Right ventricle myocardium inferior (tissue), 1 donor: ENCODE measurements at regions of chr16 and their contacts with region 1.

Region 1: DNA sequence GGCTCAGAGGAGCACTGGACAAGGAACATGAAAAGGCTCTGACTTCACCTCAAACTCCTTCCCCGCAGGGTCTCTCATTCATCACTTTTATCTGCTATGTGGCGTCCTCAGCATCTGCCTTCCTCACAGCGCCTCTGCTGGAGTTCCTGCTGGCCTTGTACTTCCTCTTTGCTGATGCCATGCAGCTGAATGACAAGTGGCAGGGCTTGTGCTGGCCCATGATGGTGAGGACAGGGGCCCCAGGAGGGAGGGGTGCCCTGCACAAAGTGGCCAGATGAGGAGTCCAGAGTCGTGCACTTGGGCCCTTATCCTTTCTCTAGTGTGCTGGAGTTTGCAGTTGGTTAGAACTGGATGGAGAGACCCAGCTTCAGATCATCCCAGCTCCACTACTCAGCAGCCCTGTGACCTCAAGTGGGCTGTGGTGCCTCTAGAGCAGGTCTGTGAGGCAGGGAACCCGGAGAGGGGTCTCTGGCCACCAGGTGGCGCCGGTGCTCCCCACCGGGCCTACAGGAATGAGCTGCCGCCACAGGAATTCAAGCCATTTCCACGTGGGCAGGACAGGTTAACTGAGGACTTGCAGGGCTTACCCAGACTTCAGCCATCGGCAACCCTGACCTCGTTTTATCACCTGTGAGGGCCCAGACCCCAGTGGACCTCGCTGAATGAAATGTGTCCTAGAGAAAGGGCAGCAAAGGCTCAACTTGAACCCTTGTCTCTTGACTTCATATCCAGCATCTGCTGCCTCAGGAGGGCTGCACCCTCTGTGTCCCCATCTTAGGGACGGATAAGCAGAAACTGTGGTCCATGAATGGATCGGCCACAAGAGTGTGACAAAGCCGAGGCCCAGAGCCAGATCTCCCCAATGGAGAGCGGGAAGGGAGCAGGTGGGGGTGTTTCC is 4.0 kb downstream of the CMTM3 start:
- DNase-seq: peak; percentile 92
- ATAC-seq: peak; percentile 52

Region 2: GRCh38 chr16:65950211-65950610 is 658.3 kb before region 1 on chr16:
- intact Hi-C with region 1: no loop called
- DNase-seq: no peak
- ATAC-seq: no peak

Region 3: GRCh38 chr16:66406534-66407221 is 201.8 kb before region 1 on chr16:
- intact Hi-C with region 1: loop called (anchors 5 kb)
- DNase-seq: peak; percentile 93
- ATAC-seq: peak; percentile 82

Region 4: DNA sequence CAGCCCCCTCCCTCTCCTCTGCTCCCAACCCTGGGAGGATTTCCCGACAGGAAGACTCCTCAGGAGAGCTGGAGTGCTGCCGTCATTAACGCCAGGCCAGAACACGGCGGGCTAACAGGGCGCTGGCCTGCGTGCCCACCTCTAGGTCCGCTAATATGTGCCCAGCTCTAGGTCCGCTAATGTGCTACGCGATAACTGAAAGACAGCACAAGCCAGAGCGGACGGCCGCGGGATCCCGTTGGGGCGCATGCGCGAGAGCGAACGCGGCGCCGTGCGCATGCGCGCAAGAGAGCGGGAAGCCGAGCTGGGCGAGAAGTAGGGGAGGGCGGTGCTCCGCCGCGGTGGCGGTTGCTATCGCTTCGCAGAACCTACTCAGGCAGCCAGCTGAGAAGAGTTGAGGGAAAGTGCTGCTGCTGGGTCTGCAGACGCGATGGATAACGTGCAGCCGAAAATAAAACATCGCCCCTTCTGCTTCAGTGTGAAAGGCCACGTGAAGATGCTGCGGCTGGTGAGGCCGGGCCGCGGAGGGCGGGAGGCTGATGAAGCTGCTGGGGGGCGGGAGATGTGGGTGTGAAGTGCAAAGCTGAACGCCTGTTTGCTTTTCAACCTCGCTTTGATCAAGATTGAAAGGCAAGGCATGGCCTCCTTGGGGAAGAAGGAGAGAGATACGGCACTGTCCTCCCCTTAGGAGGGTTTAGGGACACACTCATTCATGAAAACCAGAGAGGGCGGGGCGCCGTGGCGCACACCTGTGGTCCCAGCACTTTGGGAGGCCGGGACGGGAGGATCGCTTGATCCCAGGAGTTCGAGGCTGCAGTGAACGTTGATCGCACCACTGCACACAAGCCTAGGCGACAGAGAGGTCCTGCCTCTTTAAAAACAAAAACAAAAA is 56.0 kb before region 1 on chr16 and contains the start of gene CKLF:
- intact Hi-C with region 1: loop called (anchors 2 kb)
- DNase-seq: peak; percentile 95
- ATAC-seq: peak; percentile 84
- total RNA-seq, gene CKLF: 14.7 TPM

Region 5: DNA sequence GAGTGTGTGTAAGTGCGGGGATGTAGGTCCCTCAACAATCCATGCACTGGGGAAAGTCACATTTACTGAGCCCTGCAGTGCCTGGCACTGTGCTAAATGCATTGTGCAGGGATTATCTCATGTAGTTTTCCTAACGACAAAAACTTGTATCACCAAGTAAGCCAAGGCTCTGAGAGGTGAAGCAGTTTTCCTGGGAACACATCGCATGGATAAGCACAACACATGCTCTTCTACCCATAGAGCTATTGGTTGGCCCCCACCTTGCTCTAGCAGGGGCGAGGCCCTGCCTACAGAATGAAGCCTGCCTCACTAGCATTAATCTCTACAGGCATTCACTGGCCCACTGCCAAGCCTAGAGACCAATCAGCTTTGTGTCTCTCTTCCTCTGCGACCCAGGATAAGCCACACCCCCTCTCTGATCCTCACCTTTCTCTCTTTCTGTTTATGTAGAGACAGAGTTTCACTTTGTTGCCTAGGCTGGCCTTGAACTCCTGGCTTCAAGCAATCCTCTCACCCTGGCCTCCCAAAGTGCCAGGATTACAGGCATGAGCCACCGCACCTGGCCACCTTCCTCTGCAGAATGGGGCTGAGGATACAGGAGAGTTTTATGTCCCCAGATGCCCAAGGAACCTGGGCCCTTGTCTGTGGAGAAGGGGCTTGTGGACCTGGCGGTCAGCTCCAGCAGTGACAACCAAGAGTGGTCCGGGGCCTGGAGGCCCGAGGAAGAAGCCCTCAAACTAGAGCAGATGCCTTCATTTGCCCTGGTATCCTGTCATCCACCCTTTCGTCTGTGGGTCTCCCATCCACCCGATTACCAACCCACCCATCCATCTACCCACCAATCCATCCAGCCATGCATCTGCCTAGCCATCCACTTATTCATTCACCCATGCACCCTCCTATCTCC is 297.4 kb after region 1 on chr16:
- intact Hi-C with region 1: no loop called
- DNase-seq: peak; percentile 85
- ATAC-seq: peak; percentile 52